Common myeloid progenitor, CD34-positive (primary cell): ENCODE measurements at regions of chr16 and their contacts with region 1.

Region 1: DNA sequence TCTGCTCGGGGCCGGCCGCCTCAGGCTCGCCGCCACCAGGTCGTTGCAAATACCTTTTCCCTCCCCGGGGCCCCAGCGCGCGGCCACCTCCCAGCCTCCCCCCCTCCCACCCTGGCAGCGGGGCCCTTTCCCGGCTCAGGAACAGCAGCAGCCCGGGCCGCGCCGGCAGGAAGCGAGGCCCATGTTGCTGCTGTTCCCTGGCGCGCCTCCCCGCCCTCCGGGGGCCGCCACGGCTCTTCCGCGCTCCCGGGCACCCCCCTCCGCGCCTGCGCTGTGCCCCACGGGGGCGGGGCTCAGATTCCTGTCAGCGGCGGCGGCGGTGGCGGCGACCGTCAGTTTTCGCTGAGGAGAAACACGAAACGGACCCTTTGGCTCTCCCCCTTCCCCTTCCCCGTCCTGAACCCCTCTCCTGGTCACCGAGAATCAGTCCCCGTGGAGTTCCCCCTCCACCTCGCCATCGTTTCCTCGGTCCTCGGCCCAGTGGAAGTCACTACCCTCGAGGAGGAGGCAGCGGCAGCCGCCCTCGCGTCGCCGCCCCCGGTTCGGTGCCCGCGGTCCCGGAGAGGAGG is at the start of gene NFAT5:
- DNase-seq: peak; percentile 88 to 91 (median 89)
- H3K4me3 ChIP-seq: peak within 1 kb of the TSS; percentile 86 to 99 (median 88)
- H3K27ac ChIP-seq: peak within 1 kb of the TSS; percentile 92 to 96
- H3K4me1 ChIP-seq: peaks cover 17 to 48% (median 34%) of the 10 kb centered on the region in 4 experiments
- H3K27me3 ChIP-seq: no peaks in the 10 kb centered on the region

Region 2: DNA sequence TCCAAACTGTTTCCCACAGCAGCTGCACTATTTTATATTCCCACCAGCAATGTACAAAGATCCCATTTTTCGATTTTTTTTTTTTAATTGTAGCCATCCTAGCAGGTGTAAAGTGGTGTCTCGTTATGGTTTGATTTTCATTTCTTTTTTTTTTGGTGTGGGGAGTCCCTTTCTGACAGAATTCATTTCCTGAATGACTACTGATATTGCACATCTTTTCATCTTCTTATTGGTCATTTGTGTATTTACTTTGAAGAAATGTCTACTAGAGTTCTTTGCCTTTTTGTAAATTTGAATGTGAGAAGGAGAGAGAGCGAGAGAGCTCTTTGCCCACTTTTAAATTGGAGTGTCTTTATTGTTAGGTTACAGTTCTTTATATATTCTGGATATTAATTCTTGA is 127.3 kb before region 1 on chr16:
- CTCF ChIA-PET with region 1: interaction called, 11 read pairs
- POLR2A ChIA-PET with region 1: no interaction called
- DNase-seq: no peak
- H3K4me3 ChIP-seq: no peak overlapping the region
- H3K27ac ChIP-seq: no peak overlapping the region
- H3K4me1 ChIP-seq: peaks cover 4 to 17% (median 9%) of the 10 kb centered on the region in 4 experiments
- H3K27me3 ChIP-seq: no peaks in the 10 kb centered on the region

Region 3: DNA sequence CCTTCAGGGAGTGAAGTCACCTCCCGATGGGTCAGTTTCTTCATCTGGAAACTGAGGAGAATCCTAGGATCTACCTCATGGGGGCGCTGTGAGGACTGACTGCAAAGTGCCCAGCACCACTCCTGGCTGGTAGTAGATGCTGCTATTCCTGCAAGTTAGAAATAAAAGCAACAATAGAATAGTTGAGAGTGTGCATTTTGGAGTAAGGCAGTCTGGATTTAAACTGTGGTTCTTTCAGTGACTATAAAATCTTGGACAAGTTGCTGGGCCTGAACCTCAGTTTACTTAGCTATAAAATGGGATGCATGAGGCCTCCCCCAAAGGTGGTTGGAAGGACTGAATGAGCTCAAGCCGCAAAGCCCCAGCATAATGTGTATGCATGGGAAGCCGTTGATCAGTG is 70.8 kb before region 1 on chr16:
- CTCF ChIA-PET with region 1: no interaction called
- POLR2A ChIA-PET with region 1: no interaction called
- DNase-seq: peak in 2 of 3 donors; percentile 29 to 36
- H3K4me3 ChIP-seq: no peak overlapping the region
- H3K27ac ChIP-seq: no peak overlapping the region
- H3K4me1 ChIP-seq: no peaks in the 10 kb centered on the region
- H3K27me3 ChIP-seq: no peaks in the 10 kb centered on the region

Region 4: DNA sequence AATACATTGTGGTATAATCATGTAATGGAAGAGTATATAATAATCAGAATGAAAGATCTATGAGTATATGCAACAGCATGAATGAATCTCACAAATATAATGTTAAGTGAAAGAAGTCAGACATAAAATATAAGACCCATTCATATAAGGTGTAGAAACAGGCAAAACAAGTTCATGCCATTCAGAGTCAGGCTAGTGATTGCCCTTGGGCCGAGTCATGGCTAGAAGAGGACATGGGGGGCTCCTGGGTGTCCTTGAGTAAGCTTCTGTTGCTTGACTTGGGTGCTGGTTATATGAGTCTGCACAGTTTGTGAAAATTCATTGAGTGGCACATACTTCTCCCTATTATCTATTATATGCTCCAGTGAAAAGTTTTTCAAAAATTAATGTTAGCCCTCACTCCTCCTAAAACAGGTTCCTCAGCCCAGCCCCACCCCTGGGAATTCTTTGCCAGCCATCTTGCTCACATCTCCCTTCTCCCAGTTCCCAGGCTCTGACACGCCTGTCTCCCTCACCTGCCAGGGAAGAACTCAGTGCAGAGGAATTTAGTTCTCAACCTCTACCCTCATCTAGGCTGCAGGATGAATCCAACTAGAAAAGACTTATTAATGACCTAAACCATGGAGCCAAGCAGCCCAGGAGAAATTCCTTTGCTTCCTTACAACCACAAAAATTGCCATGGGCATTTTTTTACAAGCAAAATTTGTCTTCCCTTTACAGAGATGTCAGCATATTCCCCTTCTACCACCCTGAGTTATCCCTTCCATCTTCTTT is 52.4 kb before region 1 on chr16:
- CTCF ChIA-PET with region 1: no interaction called
- POLR2A ChIA-PET with region 1: no interaction called
- DNase-seq: no peak
- H3K4me3 ChIP-seq: no peak overlapping the region
- H3K27ac ChIP-seq: no peak overlapping the region
- H3K4me1 ChIP-seq: peaks cover 0 to 3% (median 1%) of the 10 kb centered on the region in 4 experiments
- H3K27me3 ChIP-seq: no peaks in the 10 kb centered on the region